Pancreas (tissue), 10 donors: ENCODE measurements at regions of chr2 and their contacts with region 1.

Region 1: DNA sequence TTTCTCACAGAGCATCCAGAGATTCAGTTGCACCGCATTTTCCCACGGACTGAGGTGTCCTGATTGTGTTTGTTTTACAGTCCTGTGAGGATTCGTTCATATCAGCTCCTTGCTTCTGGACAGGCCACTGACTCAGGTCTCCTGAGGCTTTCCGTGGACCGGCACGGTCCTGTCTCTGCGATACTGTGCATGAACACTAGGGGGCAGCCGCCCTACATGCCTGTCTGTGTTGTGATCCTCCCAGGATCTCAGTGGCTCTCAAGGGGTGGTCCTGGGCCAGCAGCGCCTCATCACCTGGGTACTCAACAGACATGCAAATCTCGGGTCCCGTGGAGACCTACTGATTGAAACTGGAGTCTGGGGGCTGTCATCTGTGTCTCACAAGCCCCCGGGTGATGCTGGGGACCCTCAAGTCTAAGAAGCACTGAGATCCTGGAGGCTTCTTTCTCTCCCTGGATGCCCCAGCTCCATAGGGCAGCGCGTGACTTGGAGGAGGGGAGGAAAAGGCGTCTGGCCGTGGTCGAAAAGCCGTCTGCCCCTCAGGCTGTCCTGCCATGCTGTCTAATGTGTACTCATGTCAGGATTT is 28.9 kb downstream of the IL1R2 start:
- DNase-seq: peak; percentile 70 to 94 (median 88)
- ATAC-seq: peak; percentile 84 to 96 (median 95)
- H3K4me3 ChIP-seq: no peak overlapping the region
- H3K27ac ChIP-seq: no peak overlapping the region
- H3K4me1 ChIP-seq: peaks cover 0 to 3% (median 0%) of the 10 kb centered on the region in 3 donors
- H3K27me3 ChIP-seq: no peaks in the 10 kb centered on the region
- CTCF ChIP-seq: peak; percentile 96 to 99 (median 96)

Region 2: GRCh38 chr2:102141970-102142828 is 121.5 kb after region 1 on chr2 and contains the start of gene IL1R1:
- intact Hi-C with region 1: loop called in 1 of 3 experiments (anchors 10 kb)
- DNase-seq: peak; percentile 76 to 93 (median 82)
- ATAC-seq: peak; percentile 89 to 94 (median 92)
- H3K4me3 ChIP-seq: peak within 1 kb of the TSS; percentile 16 to 72 (median 70)
- H3K27ac ChIP-seq: peak within 1 kb of the TSS; percentile 76 to 97 (median 89)
- H3K4me1 ChIP-seq: peaks cover 0 to 16% (median 4%) of the 10 kb centered on the region in 3 donors
- H3K27me3 ChIP-seq: no peaks in the 10 kb centered on the region
- CTCF ChIP-seq: no peak
- total RNA-seq, gene IL1R1: 17.1 to 74.5 (median 29.3) TPM

Region 3: DNA sequence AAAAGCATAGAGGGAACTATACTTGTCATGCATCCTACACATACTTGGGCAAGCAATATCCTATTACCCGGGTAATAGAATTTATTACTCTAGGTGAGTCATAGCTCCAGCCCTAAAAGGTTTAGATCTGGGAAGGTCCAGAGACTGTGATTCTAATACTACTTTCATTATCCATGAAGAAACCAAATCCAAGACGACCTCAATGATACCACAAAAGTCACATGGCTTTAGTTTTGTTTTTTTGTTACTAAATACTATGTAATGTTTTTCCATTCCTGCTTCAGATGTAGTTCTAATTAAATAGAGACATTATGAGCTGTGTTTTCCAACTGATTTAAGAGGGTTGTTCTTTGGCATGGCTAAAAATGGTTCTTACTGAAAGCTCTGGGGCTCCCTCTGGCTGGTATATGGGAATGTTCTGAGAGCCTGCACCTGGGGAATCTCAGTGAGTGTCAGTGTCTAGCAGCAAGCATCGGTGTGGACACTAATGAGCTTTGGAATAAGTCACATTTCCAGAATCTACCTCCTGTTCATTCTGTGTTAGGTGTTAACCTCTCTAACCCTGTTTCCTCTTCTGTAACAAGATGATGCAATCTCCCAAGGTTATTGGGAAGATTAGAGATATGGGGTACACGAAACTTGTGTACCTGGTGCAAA is 145.6 kb after region 1 on chr2:
- intact Hi-C with region 1: loop called in 1 of 3 experiments (anchors 5 kb)
- DNase-seq: peak in 1 of 6 donors; percentile 53
- ATAC-seq: peak; percentile 85 to 95 (median 94)
- H3K4me3 ChIP-seq: no peak overlapping the region
- H3K27ac ChIP-seq: peak overlapping the region in 1 of 4 donors; percentile 21
- H3K4me1 ChIP-seq: peaks cover 9 to 23% (median 11%) of the 10 kb centered on the region in 3 donors
- H3K27me3 ChIP-seq: no peaks in the 10 kb centered on the region
- CTCF ChIP-seq: peak in 3 of 4 donors; percentile 28 to 44 (median 31)

Region 4: GRCh38 chr2:102235491-102235890 is 214.8 kb after region 1 on chr2:
- intact Hi-C with region 1: loop called in 2 of 3 experiments (anchors 5 kb)
- DNase-seq: no peak
- ATAC-seq: peak in 2 of 4 donors; percentile 38 to 44
- H3K4me3 ChIP-seq: no peak overlapping the region
- H3K27ac ChIP-seq: no peak overlapping the region
- H3K4me1 ChIP-seq: peaks cover 2 to 6% (median 3%) of the 10 kb centered on the region in 3 donors
- H3K27me3 ChIP-seq: no peaks in the 10 kb centered on the region
- CTCF ChIP-seq: no peak